ENCODE measurements at regions of chr1 and their contacts with region 1.

Region 1: GRCh38 chr1:216221260-216221700 is 202.0 kb downstream of the USH2A start:
- DNase-seq: peak; percentile 57
- H3K4me3 ChIP-seq: peak overlapping the region; percentile 65
- H3K27ac ChIP-seq: peak overlapping the region; percentile 65
- H3K27me3 ChIP-seq: no peaks in the 10 kb centered on the region
- CTCF ChIP-seq: peak; percentile 83

Region 2: GRCh38 chr1:215992620-215993019 is 228.7 kb before region 1 on chr1:
- CTCF ChIA-PET with region 1: interaction called, 31 read pairs
- POLR2A ChIA-PET with region 1: no interaction called
- DNase-seq: no peak
- H3K4me3 ChIP-seq: no peak overlapping the region
- H3K27ac ChIP-seq: no peak overlapping the region
- H3K27me3 ChIP-seq: no peaks in the 10 kb centered on the region
- CTCF ChIP-seq: peak; percentile 62

Region 3: GRCh38 chr1:216054600-216054999 is 166.7 kb before region 1 on chr1:
- CTCF ChIA-PET with region 1: no interaction called
- POLR2A ChIA-PET with region 1: no interaction called
- DNase-seq: no peak
- H3K4me3 ChIP-seq: no peak overlapping the region
- H3K27ac ChIP-seq: no peak overlapping the region
- H3K27me3 ChIP-seq: no peaks in the 10 kb centered on the region
- CTCF ChIP-seq: no peak

Region 4: DNA sequence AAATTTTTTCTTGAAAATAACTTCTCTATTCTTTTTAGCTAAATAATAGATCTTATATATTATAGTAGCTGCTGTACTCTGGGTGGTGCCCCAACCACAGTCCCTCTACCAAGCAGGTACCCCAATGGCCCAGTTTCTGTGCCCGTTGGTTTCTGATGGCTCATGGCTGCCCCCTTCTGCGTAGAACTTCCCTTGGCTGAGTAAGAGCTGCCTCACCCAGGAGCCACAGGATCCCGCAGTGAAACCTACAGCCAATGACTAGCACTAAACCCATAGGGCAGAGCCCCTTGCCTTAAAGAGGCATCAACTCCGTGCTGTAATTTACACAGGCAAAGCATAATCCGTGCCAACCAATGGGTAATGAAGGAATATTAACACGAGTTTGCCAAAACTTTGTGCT is 45.6 kb before region 1 on chr1:
- CTCF ChIA-PET with region 1: interaction called, 19 read pairs
- POLR2A ChIA-PET with region 1: no interaction called
- DNase-seq: no peak
- H3K4me3 ChIP-seq: no peak overlapping the region
- H3K27ac ChIP-seq: no peak overlapping the region
- H3K27me3 ChIP-seq: no peaks in the 10 kb centered on the region
- CTCF ChIP-seq: no peak

Region 5: DNA sequence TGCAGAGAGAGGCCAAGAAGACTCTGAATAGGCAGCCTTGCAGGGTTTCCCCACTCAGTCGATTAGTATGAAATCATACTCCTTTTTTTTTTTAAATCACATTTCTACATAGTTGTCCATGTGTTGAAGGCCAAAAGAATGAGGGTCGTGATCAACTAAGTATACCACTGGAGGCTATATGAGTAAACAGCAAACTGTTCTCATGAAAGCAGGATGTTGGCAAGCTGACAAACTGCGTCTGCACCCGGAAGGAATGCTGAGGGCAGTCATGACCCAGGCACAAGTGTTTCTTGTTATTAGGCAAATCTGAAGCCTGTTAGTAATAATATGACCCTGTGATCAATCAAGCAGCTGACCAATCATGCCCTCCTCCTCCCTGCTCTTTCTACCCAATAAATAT is 11.2 kb before region 1 on chr1:
- CTCF ChIA-PET with region 1: interaction called, 82 read pairs
- POLR2A ChIA-PET with region 1: no interaction called
- DNase-seq: peak; percentile 15
- H3K4me3 ChIP-seq: no peak overlapping the region
- H3K27ac ChIP-seq: no peak overlapping the region
- H3K27me3 ChIP-seq: no peaks in the 10 kb centered on the region
- CTCF ChIP-seq: no peak

Region 6: DNA sequence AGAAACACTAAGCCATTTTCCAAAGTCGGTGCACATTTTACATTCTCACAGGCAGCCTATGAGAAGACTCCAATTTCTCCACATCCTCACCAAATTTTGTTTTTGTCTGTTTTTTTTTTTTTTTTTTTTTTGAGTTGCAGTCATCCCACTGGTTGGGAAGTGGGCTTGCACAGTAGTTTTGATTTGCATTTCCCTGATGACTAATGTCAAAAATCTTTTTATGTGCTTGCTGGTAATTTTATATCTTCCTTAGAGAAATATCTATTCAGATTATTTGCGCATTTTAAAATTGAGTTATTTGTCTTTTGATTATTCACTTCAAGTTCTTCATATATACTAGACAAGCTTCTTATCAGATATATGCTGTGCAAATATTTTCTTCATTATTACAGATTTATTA is 60.5 kb after region 1 on chr1:
- CTCF ChIA-PET with region 1: interaction called, 10 read pairs
- POLR2A ChIA-PET with region 1: no interaction called
- DNase-seq: no peak
- H3K4me3 ChIP-seq: no peak overlapping the region
- H3K27ac ChIP-seq: no peak overlapping the region
- H3K27me3 ChIP-seq: no peaks in the 10 kb centered on the region
- CTCF ChIP-seq: no peak

Region 7: DNA sequence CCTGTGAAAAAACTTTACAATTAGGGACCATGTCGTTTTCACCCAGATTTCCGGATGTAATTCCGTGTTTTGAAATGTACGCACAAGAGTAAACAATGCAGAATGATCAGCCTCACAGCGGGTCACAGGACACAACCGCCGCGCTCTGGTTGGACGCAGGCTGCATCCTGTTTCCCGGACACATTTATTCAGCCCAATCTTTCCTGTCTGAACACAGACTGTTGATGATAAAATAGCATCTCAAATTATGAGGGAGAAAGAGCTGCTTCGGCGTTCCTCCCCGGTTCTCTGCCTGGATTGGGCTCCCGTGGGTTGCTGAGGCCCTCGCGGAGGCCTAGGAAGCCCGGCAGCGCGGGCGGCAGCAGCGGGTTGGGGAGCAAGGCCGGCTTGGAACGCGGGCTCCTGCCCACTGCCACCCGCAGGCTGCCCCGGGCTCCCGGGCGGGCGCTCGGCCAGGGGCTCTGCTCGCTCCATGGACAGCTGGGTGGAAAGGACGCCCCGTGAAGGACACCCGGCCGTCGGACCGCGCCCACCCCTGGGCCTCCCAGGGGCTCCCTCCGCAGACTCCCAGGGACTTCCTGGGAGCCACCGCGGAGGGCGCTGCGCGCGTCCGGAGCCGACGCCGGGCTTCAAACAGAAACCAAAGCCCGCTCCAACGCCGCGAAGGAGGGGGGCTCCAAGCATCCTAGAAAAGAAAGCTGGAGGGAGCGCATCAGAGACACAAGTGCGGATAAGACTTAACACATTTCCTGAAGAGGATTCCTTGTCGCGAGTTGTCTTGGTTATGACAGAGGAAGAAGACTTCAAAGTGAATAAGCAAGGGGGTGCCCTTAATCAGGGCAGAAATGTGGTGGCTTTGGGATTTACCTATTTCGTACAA is 379.7 kb after region 1 on chr1:
- CTCF ChIA-PET with region 1: interaction called, 26 read pairs
- POLR2A ChIA-PET with region 1: no interaction called
- DNase-seq: peak; percentile 38
- H3K4me3 ChIP-seq: peak overlapping the region; percentile 66
- H3K27ac ChIP-seq: peak overlapping the region; percentile 96
- H3K27me3 ChIP-seq: no peaks in the 10 kb centered on the region
- CTCF ChIP-seq: peak; percentile 70